Posterior vena cava (tissue), 2 donors: ENCODE measurements at regions of chr9 and their contacts with region 1.

Region 1: DNA sequence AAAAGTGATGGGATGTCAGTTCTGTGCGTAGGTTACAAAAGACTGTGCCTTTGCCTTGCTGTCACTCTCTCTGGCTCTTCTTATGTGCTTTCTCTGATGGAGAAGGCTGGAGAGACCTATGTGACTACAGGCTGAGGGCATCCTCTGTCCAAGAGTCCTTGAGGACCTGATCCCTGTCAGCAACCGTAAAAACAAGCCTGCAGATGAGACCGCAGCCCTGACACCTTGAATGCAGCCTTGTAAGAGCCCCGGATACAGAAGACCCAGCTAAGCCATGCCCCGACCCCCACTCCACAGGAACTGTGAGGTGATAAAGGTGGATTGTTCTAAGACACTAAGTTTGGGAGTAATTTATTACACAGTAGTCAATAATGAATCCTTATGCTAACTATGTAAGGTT is 32.6 kb upstream of the FRRS1L start:
- DNase-seq: no peak

Region 2: GRCh38 chr9:109272745-109273144 is 73.1 kb after region 1 on chr9:
- intact Hi-C with region 1: loop called in 1 of 2 experiments (anchors 2 kb)
- DNase-seq: no peak

Region 3: GRCh38 chr9:109328978-109329637 is 129.4 kb after region 1 on chr9:
- intact Hi-C with region 1: no loop called
- DNase-seq: peak; percentile 89